Activated CD4-positive, alpha-beta memory T cell treated with anti-CD3 and anti-CD28 coated beads for 36 hours (primary cell): ENCODE measurements at regions of chr6 and their contacts with region 1.

Region 1: DNA sequence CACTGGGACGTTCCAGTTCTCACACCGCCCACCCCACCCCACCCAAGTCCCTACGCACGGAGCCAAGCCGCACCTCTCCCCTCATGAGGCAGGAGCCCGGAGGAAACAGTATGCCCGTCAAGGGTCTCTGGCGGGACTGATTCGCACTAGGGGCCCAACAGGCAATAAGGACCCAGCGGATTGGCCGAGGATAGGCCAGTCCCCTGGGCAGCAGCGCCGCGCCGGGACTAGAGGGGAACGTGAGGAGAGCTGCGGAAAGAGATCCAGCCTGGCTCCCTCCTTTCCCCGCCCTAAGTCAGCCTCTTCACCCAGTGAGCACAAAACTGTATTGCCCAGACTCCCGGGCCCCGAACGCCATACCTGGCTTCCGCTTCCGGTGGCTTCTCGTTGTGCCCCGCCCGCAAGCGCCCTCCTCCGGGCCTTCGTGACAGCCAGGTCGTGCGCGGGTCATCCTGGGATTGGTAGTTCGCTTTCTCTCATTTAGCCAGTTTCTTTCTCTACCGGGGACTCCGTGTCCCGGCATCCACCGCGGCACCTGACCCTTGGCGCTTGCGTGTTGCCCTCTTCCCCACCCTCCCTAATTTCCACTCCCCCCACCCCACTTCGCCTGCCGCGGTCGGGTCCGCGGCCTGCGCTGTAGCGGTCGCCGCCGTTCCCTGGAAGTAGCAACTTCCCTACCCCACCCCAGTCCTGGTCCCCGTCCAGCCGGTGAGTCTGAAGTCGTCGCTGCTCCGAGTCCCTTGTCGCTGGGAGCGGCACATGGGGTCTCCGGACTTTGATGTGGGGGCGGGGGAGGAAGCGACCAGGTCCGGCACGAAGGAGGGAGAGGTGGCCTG is at the start of gene CSNK2B:
- DNase-seq: peak; percentile 99
- H3K4me3 Mint-ChIP-seq: peak within 1 kb of the TSS; percentile 88
- H3K27ac Mint-ChIP-seq: peak within 1 kb of the TSS; percentile 95
- H3K4me1 Mint-ChIP-seq: peaks cover 61% of the 10 kb centered on the region
- H3K27me3 Mint-ChIP-seq: no peaks in the 10 kb centered on the region
- total RNA-seq, gene CSNK2B: 227 to 234 TPM

Region 2: GRCh38 chr6:31652925-31653718 is 12.6 kb before region 1 on chr6:
- CTCF ChIA-PET with region 1: interaction called, 10 read pairs
- POLR2A ChIA-PET with region 1: interaction called, 92 read pairs
- intact Hi-C with region 1: loop called (anchors 1 kb)
- DNase-seq: peak; percentile 92
- H3K4me3 Mint-ChIP-seq: peak overlapping the region; percentile 94
- H3K27ac Mint-ChIP-seq: peak overlapping the region; percentile 99
- H3K4me1 Mint-ChIP-seq: peaks cover 54% of the 10 kb centered on the region
- H3K27me3 Mint-ChIP-seq: no peaks in the 10 kb centered on the region

Region 3: DNA sequence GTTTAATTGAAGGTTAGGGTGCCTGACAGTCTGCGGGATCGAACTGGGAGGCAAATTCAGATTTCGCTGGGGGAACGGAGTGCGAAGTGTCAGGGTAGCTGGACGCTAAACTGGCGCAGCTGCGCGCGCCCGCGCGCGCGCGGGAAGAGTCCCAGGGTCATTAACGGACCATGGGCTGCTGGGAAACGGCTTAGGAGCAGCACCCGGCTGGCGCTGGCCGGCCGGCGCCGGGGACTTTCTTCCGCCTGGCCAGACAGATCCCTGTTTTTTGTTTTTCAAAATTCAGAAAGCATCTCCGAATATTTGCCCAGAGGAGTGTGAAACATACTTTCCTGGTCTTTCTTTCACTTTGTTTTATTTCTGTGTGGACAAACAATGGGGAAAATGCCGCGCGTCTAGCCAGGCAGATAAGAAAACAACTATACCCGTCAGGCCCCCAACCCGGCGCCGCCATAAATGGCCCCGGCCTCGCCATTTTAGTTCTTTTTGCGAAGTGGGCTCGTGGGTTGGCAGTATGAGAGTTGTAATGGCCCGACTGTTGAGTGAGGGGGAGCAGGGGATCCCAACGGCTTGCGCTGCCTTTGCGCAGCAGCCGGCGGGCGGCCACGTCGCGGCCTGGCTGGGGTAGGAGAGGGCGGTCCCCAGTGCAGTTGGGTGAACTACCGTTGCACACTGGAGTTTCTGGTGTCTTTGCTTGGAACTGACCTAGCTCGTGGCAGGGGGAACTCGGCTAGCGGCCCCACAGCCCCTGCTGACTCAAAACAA is 168.9 kb after region 1 on chr6:
- CTCF ChIA-PET with region 1: no interaction called
- POLR2A ChIA-PET with region 1: no interaction called
- intact Hi-C with region 1: loop called (anchors 2 kb)
- DNase-seq: peak; percentile 85
- H3K4me3 Mint-ChIP-seq: peak overlapping the region; percentile 97
- H3K27ac Mint-ChIP-seq: peak overlapping the region; percentile 97
- H3K4me1 Mint-ChIP-seq: peaks cover 40% of the 10 kb centered on the region
- H3K27me3 Mint-ChIP-seq: no peaks in the 10 kb centered on the region

Region 4: DNA sequence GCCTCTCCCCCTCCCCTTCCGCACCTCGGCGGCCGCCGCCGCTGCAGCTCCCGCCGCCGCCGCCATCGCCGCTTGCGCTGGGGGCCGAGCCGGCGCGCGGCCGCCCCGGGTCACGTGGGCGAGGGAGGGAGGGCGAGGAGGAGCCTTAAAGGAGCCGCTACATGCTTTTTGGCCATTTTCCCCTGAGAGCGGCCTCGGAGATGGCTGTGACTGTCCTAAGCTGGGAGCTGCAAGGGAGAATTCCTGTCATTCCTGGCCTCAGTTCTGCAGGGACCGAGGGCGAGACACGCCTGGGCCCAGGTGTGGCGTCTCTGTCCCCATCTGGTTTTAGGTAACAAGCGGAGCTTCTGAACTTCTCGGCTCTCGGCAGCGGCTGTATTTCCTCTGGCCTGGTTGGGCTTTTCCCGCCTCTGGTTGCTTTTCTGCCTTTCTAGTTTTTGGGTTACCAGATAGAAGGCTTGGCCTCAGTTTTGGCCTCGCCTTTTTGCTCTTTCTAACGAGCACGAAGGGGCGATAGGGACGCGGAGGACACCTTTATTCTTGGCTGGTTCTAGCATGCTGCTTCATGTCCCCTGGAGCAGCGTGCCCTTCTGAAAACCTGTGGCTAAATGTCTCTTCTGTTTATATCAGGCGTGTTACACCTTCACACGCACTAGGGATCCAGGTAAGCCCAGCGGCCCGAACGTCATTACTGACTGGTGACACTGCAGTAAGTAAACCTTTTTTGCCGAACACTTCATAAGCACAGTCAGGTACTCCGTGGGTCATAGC is 232.1 kb after region 1 on chr6 and contains the start of gene EHMT2:
- CTCF ChIA-PET with region 1: no interaction called
- POLR2A ChIA-PET with region 1: interaction called, 3 read pairs
- intact Hi-C with region 1: loop called (anchors 2 kb)
- DNase-seq: peak; percentile 91
- H3K4me3 Mint-ChIP-seq: peak within 1 kb of the TSS; percentile 94
- H3K27ac Mint-ChIP-seq: peak within 1 kb of the TSS; percentile 94
- H3K4me1 Mint-ChIP-seq: peaks cover 34% of the 10 kb centered on the region
- H3K27me3 Mint-ChIP-seq: no peaks in the 10 kb centered on the region
- total RNA-seq, gene EHMT2: 45.5 to 46.0 TPM

Region 5: GRCh38 chr6:32127717-32128592 is 462.2 kb after region 1 on chr6 and contains the start of gene ATF6B:
- CTCF ChIA-PET with region 1: no interaction called
- POLR2A ChIA-PET with region 1: no interaction called
- intact Hi-C with region 1: loop called (anchors 1 kb)
- DNase-seq: peak; percentile 99
- H3K4me3 Mint-ChIP-seq: peak within 1 kb of the TSS; percentile 99
- H3K27ac Mint-ChIP-seq: peak within 1 kb of the TSS; percentile 96
- H3K4me1 Mint-ChIP-seq: peaks cover 40% of the 10 kb centered on the region
- H3K27me3 Mint-ChIP-seq: no peaks in the 10 kb centered on the region
- total RNA-seq, gene ATF6B: 67.4 to 80.9 TPM